ENCODE measurements at regions of chr1 and their contacts with region 1.

Region 1: GRCh38 chr1:154878371-154879022 is 8.4 kb upstream of the KCNN3 start:
- DNase-seq: peak; percentile 78
- ATAC-seq: peak; percentile 93
- H3K4me3 ChIP-seq: no peak overlapping the region
- H3K4me3 Mint-ChIP-seq: no peak overlapping the region
- H3K27ac ChIP-seq: no peak overlapping the region
- H3K27ac Mint-ChIP-seq: no peak overlapping the region
- H3K4me1 ChIP-seq: peaks cover 0 to 2% of the 10 kb centered on the region in 2 donors
- H3K4me1 Mint-ChIP-seq: no peaks in the 10 kb centered on the region
- H3K27me3 ChIP-seq: no peaks in the 10 kb centered on the region
- H3K27me3 Mint-ChIP-seq: no peaks in the 10 kb centered on the region
- CTCF ChIP-seq: peak; percentile 89

Region 2: DNA sequence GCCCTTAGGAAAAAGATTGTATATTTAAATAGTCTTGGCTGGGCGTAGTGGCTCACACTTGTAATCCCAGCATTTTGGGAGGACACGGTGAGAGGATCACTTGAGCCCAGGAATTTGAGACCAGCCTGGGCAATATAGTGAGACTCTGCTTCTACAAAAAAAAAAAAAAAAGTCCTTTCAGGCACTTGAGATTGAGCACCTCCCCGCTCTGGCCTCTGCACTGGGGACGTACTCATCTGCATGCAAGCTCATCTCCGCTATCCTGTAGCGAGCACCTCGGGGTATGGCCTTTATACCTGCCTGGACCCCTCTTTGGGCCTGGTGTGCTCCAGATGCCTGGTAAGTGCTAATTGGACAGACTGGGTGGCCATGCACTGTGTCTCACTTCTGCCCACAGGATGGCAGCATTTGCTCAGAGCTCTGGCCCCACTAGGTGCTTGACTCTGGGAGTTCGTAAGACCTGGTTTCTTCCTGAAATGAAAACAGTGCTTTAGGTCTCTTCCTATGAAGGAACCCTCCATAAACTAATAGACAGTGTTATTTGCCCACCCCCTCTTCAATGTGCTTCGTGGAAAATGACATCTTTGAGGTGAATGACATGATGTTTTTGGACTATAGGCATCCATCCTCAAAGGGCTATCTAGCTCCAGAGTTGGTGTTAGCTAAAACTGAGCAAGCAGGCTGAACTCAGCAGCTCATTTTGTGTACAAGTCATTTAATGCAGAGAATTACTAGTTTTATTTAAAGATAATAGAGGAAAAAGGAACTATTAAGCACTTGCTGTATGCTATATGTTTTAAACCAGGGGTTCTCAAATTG is 208.8 kb before region 1 on chr1:
- CTCF ChIA-PET with region 1: interaction called, 25 read pairs
- POLR2A ChIA-PET with region 1: no interaction called
- intact Hi-C with region 1: no loop called
- DNase-seq: peak; percentile 79
- ATAC-seq: peak; percentile 96
- H3K4me3 ChIP-seq: no peak overlapping the region
- H3K4me3 Mint-ChIP-seq: no peak overlapping the region
- H3K27ac ChIP-seq: no peak overlapping the region
- H3K27ac Mint-ChIP-seq: no peak overlapping the region
- H3K4me1 ChIP-seq: peaks cover 0 to 3% of the 10 kb centered on the region in 2 donors
- H3K4me1 Mint-ChIP-seq: no peaks in the 10 kb centered on the region
- H3K27me3 ChIP-seq: no peaks in the 10 kb centered on the region
- H3K27me3 Mint-ChIP-seq: peaks cover 7% of the 10 kb centered on the region
- CTCF ChIP-seq: peak; percentile 66

Region 3: DNA sequence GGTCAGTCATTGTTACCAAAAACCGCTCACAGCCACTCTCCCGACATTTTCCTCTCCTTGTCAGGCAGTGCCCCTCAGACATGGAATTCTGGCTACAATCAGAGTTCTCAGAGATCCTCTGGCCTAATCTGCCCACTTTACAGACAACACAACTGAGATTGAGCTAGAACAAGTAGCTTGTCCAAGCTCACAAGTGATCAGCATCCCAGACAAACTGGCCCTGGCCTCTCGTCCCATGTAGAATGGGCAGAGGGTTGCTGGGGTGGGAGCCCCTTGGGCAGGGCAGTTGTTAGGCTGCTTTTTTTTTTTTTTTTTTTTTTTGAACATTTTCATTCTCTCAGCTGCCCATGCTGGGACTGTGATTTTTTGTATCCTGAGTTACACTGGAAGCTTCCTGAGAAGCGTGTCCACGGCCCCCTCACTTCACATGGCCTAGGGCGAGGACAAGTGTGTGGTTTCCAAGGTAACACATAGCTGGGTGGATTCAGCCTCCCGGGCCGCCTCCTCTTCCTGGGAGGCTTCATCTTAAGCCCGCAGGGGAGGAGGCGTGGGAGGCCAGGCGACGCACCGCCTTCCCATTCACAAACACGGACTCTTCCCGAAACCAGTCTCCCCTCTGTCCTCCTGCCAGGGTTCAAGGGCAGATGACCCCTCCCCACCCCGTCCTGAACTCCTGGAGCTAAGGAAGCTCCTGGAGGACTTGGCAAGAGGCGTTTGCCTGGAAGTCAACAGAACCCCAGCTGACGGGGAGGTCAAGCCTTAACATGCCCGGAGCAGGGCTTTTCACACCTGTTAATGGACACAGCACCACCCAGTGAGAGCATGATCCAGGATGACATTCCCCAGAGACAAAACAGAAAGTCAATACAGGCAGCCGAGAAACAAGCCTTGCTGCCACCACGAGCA is 65.3 kb before region 1 on chr1:
- CTCF ChIA-PET with region 1: no interaction called
- POLR2A ChIA-PET with region 1: no interaction called
- intact Hi-C with region 1: no loop called
- DNase-seq: no peak
- ATAC-seq: no peak
- H3K4me3 ChIP-seq: no peak overlapping the region
- H3K4me3 Mint-ChIP-seq: no peak overlapping the region
- H3K27ac ChIP-seq: no peak overlapping the region
- H3K27ac Mint-ChIP-seq: no peak overlapping the region
- H3K4me1 ChIP-seq: peaks cover 0 to 13% of the 10 kb centered on the region in 2 donors
- H3K4me1 Mint-ChIP-seq: peaks cover 2% of the 10 kb centered on the region
- H3K27me3 ChIP-seq: peaks cover 0 to 15% (median 2%) of the 10 kb centered on the region in 4 experiments
- H3K27me3 Mint-ChIP-seq: peaks cover 28% of the 10 kb centered on the region
- CTCF ChIP-seq: no peak

Region 4: GRCh38 chr1:154860156-154860870 is 18.2 kb before region 1 on chr1:
- CTCF ChIA-PET with region 1: interaction called, 10 read pairs
- POLR2A ChIA-PET with region 1: no interaction called
- intact Hi-C with region 1: no loop called
- DNase-seq: peak; percentile 74
- ATAC-seq: peak; percentile 67
- H3K4me3 ChIP-seq: peak overlapping the region in 2 of 5 experiments; percentile 12 to 37
- H3K4me3 Mint-ChIP-seq: peak overlapping the region; percentile 69
- H3K27ac ChIP-seq: peak overlapping the region in 1 of 2 donors; percentile 47
- H3K27ac Mint-ChIP-seq: peak overlapping the region; percentile 76
- H3K4me1 ChIP-seq: peaks cover 41 to 66% of the 10 kb centered on the region in 2 donors
- H3K4me1 Mint-ChIP-seq: peaks cover 52% of the 10 kb centered on the region
- H3K27me3 ChIP-seq: peaks cover 0 to 11% (median 0%) of the 10 kb centered on the region in 4 experiments
- H3K27me3 Mint-ChIP-seq: peaks cover 6% of the 10 kb centered on the region
- CTCF ChIP-seq: no peak